Colonic mucosa (tissue), 4 donors: ENCODE measurements at regions of chr17 and their contacts with region 1.

Region 1: GRCh38 chr17:5249615-5250014 is 15.0 kb upstream of the SCIMP start:
- DNase-seq: peak; percentile 74
- H3K4me3 ChIP-seq: no peak overlapping the region
- H3K27ac ChIP-seq: no peak overlapping the region
- H3K4me1 ChIP-seq: no peaks in the 10 kb centered on the region
- H3K27me3 ChIP-seq: no peaks in the 10 kb centered on the region
- CTCF ChIP-seq: peak; percentile 45

Region 2: DNA sequence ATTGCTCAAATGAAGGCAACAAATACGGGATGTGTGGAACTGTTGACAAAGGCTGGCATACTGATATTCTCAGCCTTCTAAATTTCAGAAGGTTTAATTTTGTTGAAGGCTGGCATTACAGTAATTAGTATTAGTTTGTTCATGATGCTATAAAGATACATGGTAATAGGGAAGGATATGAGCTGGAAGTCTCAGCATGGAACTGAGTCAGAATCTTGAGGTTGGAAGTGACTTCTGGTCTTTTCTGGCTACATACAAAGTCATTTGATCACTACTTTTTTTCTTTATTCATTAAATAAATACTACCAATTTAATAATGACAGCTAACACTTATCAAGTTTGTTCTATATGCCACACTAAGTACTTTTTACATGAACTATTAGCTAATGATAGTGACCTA is 55.0 kb after region 1 on chr17:
- intact Hi-C with region 1: loop called (anchors 10 kb)
- DNase-seq: no peak
- H3K4me3 ChIP-seq: no peak overlapping the region
- H3K27ac ChIP-seq: no peak overlapping the region
- H3K4me1 ChIP-seq: no peaks in the 10 kb centered on the region
- H3K27me3 ChIP-seq: no peaks in the 10 kb centered on the region
- CTCF ChIP-seq: no peak

Region 3: DNA sequence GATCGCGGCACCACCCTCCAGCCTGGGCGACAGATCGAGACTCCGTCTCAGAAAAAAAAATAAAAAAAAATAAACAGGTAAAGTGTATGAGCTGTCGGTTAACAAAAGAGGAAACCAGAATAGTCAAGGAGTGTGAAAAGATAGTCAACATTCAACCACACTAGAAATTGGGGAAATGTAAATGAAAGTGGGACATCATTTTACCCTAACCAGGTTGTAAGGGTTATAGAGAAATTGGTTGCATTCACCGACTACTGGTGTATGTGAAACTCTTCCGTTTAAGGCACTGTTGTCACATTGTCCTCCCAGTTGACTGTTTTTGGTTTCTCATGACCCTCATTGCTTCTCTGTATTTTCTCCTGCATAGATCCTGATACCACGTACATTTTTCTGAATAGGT is 95.3 kb after region 1 on chr17:
- intact Hi-C with region 1: no loop called
- DNase-seq: no peak
- H3K4me3 ChIP-seq: no peak overlapping the region
- H3K27ac ChIP-seq: no peak overlapping the region
- H3K4me1 ChIP-seq: no peaks in the 10 kb centered on the region
- H3K27me3 ChIP-seq: no peaks in the 10 kb centered on the region
- CTCF ChIP-seq: no peak